SK-N-SH (cell line): ENCODE measurements at regions of chr7 and their contacts with region 1.

Region 1: DNA sequence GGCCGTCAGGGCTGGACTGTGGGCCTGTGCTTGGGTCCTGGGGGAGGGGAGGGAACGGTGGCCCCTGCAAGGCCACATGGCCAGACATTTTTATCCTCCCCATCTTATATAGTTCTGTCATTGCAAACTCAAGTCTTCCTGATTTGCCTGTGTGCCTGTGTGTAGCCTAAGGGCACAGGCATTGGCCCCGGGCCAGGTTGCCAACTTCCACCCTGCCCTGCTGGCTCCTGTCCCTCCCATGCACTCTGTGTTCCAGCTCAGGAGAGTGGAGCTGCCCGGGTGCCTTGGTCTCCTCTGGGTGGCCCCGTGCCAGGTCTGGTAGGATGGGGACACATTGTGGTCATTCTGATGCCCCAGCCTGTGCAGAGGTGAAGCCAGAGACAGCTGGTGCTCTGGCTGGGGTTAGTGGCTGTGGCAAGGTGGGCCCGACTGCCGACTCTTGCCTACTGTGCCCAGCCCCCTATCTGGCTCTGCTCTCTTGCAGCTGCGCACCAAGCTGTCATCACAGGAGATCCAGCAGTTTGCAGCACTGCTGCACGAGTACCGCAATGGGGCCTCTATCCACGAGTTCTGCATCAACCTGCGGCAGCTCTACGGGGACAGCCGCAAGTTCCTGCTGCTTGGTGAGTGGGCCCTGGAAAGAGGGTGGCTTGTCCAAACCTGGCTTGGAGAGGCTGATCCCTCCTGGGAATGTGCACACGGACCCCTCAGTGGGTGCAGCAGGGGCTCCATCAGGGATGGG is 14.8 kb downstream of the NACAD start:
- DNase-seq: peak; percentile 96
- H3K4me3 ChIP-seq: no peak overlapping the region
- H3K27ac ChIP-seq: peak overlapping the region in 1 of 2 experiments; percentile 91; a peak in 2 of 4 replicates
- H3K4me1 ChIP-seq: peaks cover 0 to 40% of the 10 kb centered on the region in 2 experiments; a peak in 1 of 4 replicates
- H3K27me3 ChIP-seq: no peaks in the 10 kb centered on the region
- CTCF ChIP-seq: no peak
- EP300 ChIP-seq: peak in 1 of 2 experiments; percentile 79; a peak in 2 of 4 replicates
- RAD21 ChIP-seq: peak; percentile 36

Region 2: DNA sequence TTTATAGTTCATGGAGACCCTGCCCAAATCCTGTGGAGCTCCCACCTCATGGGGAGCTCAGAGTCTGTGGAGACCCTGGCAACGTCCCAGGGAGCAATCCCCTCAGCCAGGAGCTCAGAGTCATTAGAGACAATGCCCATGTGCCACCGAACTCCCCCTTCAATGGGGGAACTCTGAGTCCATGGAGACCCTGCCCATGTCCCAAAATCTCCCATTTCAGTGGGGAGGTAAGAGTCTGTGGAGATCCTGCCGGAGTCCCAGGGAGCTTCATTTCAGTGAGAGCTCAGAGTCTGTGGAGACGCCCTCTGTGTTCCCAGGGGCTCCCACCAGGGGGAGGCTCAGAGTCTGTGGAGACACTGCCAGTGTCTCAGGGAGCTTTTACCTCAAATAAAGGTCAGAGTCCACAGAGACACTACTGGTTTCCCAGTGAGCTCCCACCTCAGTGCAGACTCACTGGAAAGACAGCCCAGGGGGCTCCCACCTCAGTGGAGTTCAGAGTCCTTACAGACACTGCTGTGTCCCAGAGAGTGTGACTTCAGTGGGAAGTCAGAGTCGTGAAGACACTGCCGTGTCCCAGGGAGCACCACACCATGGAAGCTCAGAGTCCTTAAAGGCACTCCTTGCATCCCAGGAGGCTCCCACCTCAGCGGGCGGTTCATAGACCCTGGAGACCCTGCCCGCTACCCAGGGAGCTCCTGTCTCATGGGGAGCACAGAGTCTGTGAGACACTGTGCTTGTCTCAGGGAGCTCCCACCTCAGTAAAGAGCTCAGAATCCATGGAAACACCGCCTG is 100.2 kb before region 1 on chr7:
- CTCF ChIA-PET with region 1: interaction called, 23 read pairs
- POLR2A ChIA-PET with region 1: interaction called, 10 read pairs
- DNase-seq: peak; percentile 75
- H3K4me3 ChIP-seq: no peak overlapping the region
- H3K27ac ChIP-seq: no peak overlapping the region
- H3K4me1 ChIP-seq: peaks cover 0 to 3% of the 10 kb centered on the region in 2 experiments; a peak in 1 of 4 replicates
- H3K27me3 ChIP-seq: no peaks in the 10 kb centered on the region
- CTCF ChIP-seq: peak; percentile 61
- EP300 ChIP-seq: no peak
- RAD21 ChIP-seq: peak; percentile 59

Region 3: GRCh38 chr7:44999245-45000095 is 74.5 kb before region 1 on chr7:
- CTCF ChIA-PET with region 1: interaction called, 7 read pairs
- POLR2A ChIA-PET with region 1: interaction called, 28 read pairs
- DNase-seq: peak; percentile 99
- H3K4me3 ChIP-seq: peak overlapping the region; percentile 48 to 77
- H3K27ac ChIP-seq: peak overlapping the region; percentile 80 to 86
- H3K4me1 ChIP-seq: peaks cover 0 to 10% of the 10 kb centered on the region in 2 experiments; a peak in 3 of 4 replicates
- H3K27me3 ChIP-seq: no peaks in the 10 kb centered on the region
- CTCF ChIP-seq: no peak
- EP300 ChIP-seq: 0 out of 4 replicates have a peak, but pooled peaks of 1 of the 2 experiments have one; percentile 11
- RAD21 ChIP-seq: no peak

Region 4: GRCh38 chr7:45089341-45089891 is 15.5 kb after region 1 on chr7:
- CTCF ChIA-PET with region 1: interaction called, 3 read pairs
- POLR2A ChIA-PET with region 1: interaction called, 13 read pairs
- DNase-seq: peak; percentile 98
- H3K4me3 ChIP-seq: peak overlapping the region; percentile 70 to 98
- H3K27ac ChIP-seq: peak overlapping the region in 1 of 2 experiments; percentile 97; a peak in 2 of 4 replicates
- H3K4me1 ChIP-seq: peaks cover 0 to 26% of the 10 kb centered on the region in 2 experiments; a peak in 1 of 4 replicates
- H3K27me3 ChIP-seq: no peaks in the 10 kb centered on the region
- CTCF ChIP-seq: no peak
- EP300 ChIP-seq: no peak; a peak in 1 of 4 replicates
- RAD21 ChIP-seq: no peak; the same call in 1 of the 2 replicates

Region 5: DNA sequence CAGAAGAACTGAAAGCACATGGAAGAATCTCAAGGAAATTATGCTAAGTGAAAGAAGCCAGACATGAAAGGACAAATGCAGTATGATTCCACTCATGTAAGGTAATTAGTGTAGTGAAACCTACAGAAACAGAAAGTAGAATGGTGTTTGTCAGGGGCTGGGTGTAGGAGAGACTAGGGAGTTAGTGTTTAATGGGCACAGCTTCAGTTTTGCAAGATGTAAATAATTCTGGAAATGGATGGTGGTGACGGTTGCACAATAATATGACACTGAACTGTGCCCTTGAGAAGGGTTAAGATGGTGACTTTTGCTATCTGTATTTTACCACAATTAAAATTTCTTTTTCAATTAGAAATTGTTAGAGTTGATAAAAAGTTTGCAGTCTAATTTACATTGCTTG is 342.9 kb after region 1 on chr7:
- CTCF ChIA-PET with region 1: no interaction called
- POLR2A ChIA-PET with region 1: no interaction called
- DNase-seq: no peak
- H3K4me3 ChIP-seq: no peak overlapping the region
- H3K27ac ChIP-seq: no peak overlapping the region
- H3K4me1 ChIP-seq: peaks cover 0 to 13% of the 10 kb centered on the region in 2 experiments; a peak in 1 of 4 replicates
- H3K27me3 ChIP-seq: no peaks in the 10 kb centered on the region
- CTCF ChIP-seq: no peak
- EP300 ChIP-seq: no peak
- RAD21 ChIP-seq: no peak